ENCODE measurements at regions of chr13 and their contacts with region 1.

Region 1: DNA sequence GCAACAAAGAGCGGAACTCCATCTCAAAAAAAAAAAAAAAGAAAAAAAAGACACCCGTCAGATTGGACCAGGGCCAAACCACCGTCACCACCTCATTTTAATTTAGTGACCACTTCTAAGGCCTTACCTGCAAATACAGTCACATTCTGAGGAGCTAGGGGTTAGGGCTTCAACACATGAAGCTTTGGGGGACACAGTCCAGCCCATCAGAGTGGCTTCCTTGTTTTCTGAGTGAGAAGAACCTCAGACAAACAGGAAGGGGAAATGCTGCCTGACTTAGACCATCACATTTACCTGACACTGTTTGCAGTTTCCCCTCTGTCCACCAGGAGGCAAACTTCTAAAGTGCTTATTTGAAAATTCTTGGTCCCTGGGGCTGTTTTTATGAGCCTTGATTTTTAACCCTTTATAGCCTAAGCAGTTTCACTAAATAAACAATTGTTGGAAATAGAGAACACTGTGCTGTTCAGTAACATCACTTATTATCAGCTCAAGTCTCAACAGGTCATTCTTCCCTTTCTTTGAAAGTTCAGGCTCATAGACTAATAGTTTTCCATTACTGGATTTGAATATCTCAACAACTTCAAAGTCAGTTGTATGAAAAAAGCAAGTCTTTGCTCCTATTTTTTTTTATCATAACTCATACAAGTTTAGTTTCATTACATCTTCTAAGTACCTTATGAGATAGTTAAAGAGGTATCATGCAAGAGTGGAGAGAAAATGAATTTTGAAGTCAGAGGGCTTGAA is 74.9 kb upstream of the WASF3 start:
- DNase-seq: peak; percentile 23
- ATAC-seq: peak; percentile 82
- H3K4me3 ChIP-seq: no peak overlapping the region
- H3K27ac ChIP-seq: no peak overlapping the region
- H3K4me1 ChIP-seq: no peaks in the 10 kb centered on the region
- H3K27me3 ChIP-seq: no peaks in the 10 kb centered on the region; a peak in 1 of 4 replicates
- CTCF ChIP-seq: peak; percentile 71 to 90 (median 82)
- EP300 ChIP-seq: no peak
- POLR2A ChIP-seq: no peak
- RAD21 ChIP-seq: peak; percentile 47; the same call in 1 of the 2 replicates

Region 2: DNA sequence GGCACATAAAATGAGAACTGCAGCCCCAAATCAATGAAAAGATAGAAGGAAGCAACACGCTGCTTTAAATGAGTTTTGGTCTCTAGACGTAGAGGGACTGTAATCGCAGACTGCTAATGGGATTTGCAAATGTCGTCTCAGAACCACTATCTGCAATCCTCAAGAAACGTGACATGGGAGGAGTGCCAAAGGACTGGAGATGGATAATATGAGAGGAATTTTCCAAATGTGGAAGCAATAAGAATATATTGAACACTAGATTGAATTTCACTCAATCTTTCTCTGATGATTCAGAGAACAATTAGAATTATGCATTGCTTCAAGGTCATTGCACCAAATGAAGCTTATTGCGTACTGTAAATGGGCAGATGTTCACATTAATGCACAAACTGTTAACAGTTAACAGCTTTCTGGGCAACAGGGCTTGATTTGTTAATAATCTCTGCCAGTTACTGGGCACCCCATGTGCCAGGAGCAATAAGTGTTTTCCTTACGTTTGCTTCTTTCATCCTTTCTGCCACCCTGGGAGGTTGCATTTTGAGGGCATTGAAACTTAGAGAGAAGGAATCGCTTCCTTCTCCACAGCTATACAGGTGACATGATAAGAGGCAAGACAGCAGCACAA is 12.1 kb after region 1 on chr13:
- CTCF ChIA-PET with region 1: interaction called, 13 read pairs
- POLR2A ChIA-PET with region 1: no interaction called
- RAD21 ChIA-PET with region 1: no interaction called
- SMC1A ChIA-PET with region 1: interaction called, 7 read pairs
- in situ Hi-C with region 1: no loop called
- intact Hi-C with region 1: no loop called
- DNase-seq: no peak
- ATAC-seq: no peak
- H3K4me3 ChIP-seq: no peak overlapping the region
- H3K27ac ChIP-seq: no peak overlapping the region
- H3K4me1 ChIP-seq: no peaks in the 10 kb centered on the region
- H3K27me3 ChIP-seq: no peaks in the 10 kb centered on the region; a peak in 1 of 4 replicates
- CTCF ChIP-seq: no peak
- EP300 ChIP-seq: no peak
- POLR2A ChIP-seq: no peak
- RAD21 ChIP-seq: no peak

Region 3: DNA sequence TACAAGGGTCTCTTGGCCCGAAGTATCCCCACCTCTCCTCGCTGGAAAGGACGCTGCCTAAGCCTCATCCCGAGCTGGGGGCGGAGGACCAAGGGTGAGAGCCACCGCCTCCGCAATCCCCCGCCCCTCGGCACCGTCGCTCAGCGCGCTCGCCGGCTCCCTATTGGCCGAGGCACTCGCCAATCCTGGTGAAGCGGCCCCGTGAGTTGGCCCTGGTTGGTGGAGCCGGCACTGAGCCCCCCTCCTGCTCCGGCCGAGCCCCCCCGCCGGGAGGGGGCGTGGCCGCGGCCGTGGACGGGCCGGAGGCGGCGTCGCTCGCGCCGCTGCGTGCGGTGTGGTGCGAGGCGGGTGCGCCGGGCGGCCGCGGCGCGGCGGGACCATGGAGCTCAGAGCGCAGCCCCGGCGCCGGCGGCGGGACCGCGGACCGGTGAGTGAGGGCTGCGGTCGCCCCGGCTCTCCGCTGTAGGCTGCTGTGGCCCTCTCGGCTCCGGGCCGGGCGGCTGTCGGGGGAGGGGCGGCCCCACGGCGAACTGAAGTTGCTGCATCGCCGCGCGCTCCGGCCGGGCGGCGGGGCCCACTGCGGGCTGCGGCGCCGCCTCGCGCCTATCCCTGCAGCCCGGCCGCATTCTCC is 74.9 kb after region 1 on chr13 and contains the start of gene WASF3:
- CTCF ChIA-PET with region 1: no interaction called
- POLR2A ChIA-PET with region 1: no interaction called
- RAD21 ChIA-PET with region 1: no interaction called
- SMC1A ChIA-PET with region 1: no interaction called
- in situ Hi-C with region 1: no loop called
- intact Hi-C with region 1: no loop called
- DNase-seq: peak; percentile 3
- ATAC-seq: peak; percentile 64
- H3K4me3 ChIP-seq: no peak within 1 kb of the TSS
- H3K27ac ChIP-seq: no peak within 1 kb of the TSS
- H3K4me1 ChIP-seq: no peaks in the 10 kb centered on the region
- H3K27me3 ChIP-seq: peaks cover 0 to 3% of the 10 kb centered on the region in 2 experiments; a peak in 3 of 4 replicates
- CTCF ChIP-seq: no peak
- EP300 ChIP-seq: no peak
- POLR2A ChIP-seq: no peak
- RAD21 ChIP-seq: no peak
- polyA plus RNA-seq, gene WASF3: not detected

Region 4: GRCh38 chr13:26698392-26699196 is 216.0 kb after region 1 on chr13:
- CTCF ChIA-PET with region 1: interaction called, 6 read pairs
- POLR2A ChIA-PET with region 1: no interaction called
- RAD21 ChIA-PET with region 1: interaction called, 6 read pairs
- SMC1A ChIA-PET with region 1: no interaction called
- in situ Hi-C with region 1: no loop called
- intact Hi-C with region 1: loop called (anchors 1 kb)
- DNase-seq: peak; percentile 20
- ATAC-seq: peak; percentile 88
- H3K4me3 ChIP-seq: no peak overlapping the region
- H3K27ac ChIP-seq: no peak overlapping the region
- H3K4me1 ChIP-seq: no peaks in the 10 kb centered on the region
- H3K27me3 ChIP-seq: no peaks in the 10 kb centered on the region
- CTCF ChIP-seq: peak; percentile 89 to 96 (median 91)
- EP300 ChIP-seq: no peak
- POLR2A ChIP-seq: no peak
- RAD21 ChIP-seq: peak; percentile 91